ENCODE measurements at regions of chr5 and their contacts with region 1.

Region 1: GRCh38 chr5:76790632-76791290 is 28.1 kb upstream of the F2RL1 start:
- DNase-seq: peak; percentile 98
- H3K4me3 ChIP-seq: no peak overlapping the region
- H3K27ac ChIP-seq: peak overlapping the region; percentile 94
- H3K4me1 ChIP-seq: peaks cover 55% of the 10 kb centered on the region
- H3K27me3 ChIP-seq: no peaks in the 10 kb centered on the region
- CTCF ChIP-seq: no peak
- POLR2A ChIP-seq: peak; percentile 31

Region 2: DNA sequence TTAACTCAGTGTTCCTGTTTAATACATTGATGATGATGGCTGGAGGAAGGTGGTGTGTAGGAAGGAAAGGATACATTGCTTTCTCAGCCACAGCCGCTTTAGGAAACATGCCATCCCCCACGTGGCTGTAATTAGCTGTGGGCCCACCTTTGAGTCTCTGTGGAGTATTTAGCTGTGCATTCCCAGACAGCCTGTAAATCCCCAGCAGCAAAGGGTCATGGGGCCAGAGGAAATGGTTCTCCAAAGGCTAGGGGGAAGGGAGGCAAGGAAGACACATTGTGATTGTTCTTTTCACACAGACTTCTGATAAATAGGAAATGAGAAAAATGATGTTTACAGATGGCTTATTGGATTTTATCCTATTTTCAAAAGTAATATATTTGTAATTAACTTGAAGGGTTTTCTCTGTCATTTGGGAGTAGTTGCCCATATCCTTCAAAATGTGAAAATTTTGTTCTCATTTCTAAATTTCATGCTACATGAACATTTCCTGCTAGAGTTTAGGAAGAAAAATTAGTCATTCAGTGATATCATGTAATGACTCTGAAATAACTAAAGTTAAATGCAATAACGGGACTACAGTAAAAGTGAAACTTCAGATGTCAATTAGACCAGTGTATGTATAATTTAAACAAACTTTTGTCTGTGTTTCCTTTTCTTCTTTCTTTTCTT is 99.2 kb before region 1 on chr5:
- CTCF ChIA-PET with region 1: interaction called, 3 read pairs
- POLR2A ChIA-PET with region 1: interaction called, 3 read pairs
- dilution Hi-C with region 1: no loop called
- intact Hi-C with region 1: loop called (anchors 1 kb)
- DNase-seq: peak; percentile 98
- H3K4me3 ChIP-seq: no peak overlapping the region
- H3K27ac ChIP-seq: peak overlapping the region; percentile 91
- H3K4me1 ChIP-seq: peaks cover 79% of the 10 kb centered on the region
- H3K27me3 ChIP-seq: no peaks in the 10 kb centered on the region
- CTCF ChIP-seq: no peak
- POLR2A ChIP-seq: peak; percentile 43

Region 3: DNA sequence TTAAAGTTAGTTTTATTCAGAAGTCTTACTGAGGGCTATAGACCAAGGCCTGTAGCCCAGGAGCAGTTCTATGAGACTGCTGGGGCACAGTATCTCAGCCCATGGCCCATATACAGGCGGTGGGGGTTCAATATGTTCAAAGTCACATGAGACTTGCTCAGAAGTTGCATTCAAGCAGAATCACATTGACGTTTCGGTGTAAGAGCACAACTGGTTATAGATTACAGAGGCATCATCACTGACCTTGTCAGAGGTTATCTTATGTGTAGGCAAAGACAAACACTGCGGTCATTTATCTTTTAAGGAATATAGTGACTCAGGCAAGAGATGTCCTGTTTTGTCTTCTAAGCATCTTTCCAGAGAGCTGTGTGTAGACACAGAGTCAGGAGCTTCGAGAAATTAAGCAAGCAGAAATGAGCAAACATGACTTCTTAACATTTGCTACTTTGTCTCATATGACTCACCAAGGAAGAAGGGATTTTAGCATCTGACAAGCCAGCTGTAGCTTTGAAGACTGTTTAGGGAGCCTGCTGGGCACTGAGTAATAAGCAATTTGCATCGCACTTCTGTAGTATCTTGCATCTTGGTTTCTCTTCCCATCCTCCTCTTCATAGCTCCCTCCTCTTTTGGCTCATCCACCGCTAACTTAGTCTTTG is 15.2 kb after region 1 on chr5:
- CTCF ChIA-PET with region 1: interaction called, 34 read pairs
- POLR2A ChIA-PET with region 1: interaction called, 10 read pairs
- dilution Hi-C with region 1: no loop called
- intact Hi-C with region 1: loop called (anchors 1 kb)
- DNase-seq: peak; percentile 77
- H3K4me3 ChIP-seq: no peak overlapping the region
- H3K27ac ChIP-seq: peak overlapping the region; percentile 83
- H3K4me1 ChIP-seq: peaks cover 40% of the 10 kb centered on the region
- H3K27me3 ChIP-seq: no peaks in the 10 kb centered on the region
- CTCF ChIP-seq: no peak
- POLR2A ChIP-seq: no peak

Region 4: DNA sequence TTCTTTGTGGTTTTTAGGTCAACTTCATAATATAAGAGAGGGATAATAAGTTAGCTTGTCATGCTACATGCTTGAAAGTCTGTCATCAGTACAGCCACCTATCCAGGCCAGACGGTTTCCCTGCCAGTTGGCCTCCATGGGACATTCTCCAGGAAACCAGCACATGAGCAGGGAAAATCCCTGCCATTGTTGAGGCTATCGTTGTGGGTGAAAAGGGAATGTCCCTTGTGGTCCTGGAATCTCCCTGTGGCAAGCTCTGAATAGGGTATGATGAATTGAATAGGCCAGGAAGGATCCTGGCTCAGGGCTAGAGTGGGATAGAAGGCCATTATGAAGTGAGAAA is 40.3 kb after region 1 on chr5:
- CTCF ChIA-PET with region 1: interaction called, 7 read pairs
- POLR2A ChIA-PET with region 1: no interaction called
- dilution Hi-C with region 1: no loop called
- intact Hi-C with region 1: loop called (anchors 1 kb)
- DNase-seq: peak; percentile 89
- H3K4me3 ChIP-seq: no peak overlapping the region
- H3K27ac ChIP-seq: peak overlapping the region; percentile 82
- H3K4me1 ChIP-seq: peaks cover 13% of the 10 kb centered on the region
- H3K27me3 ChIP-seq: no peaks in the 10 kb centered on the region
- CTCF ChIP-seq: no peak
- POLR2A ChIP-seq: no peak